ENCODE measurements at regions of chr12 and their contacts with region 1.

Region 1: GRCh38 chr12:49776413-49776812 is 35.1 kb downstream of the TMBIM6 start:
- DNase-seq: no peak
- H3K4me3 ChIP-seq: no peak overlapping the region
- CTCF ChIP-seq: peak; percentile 83

Region 2: GRCh38 chr12:49609746-49610089 is 166.7 kb before region 1 on chr12:
- CTCF ChIA-PET with region 1: no interaction called
- POLR2A ChIA-PET with region 1: no interaction called
- DNase-seq: no peak
- H3K4me3 ChIP-seq: no peak overlapping the region
- CTCF ChIP-seq: no peak

Region 3: GRCh38 chr12:49763006-49763591 is 13.3 kb before region 1 on chr12:
- CTCF ChIA-PET with region 1: interaction called, 36 read pairs
- POLR2A ChIA-PET with region 1: no interaction called
- DNase-seq: no peak
- H3K4me3 ChIP-seq: no peak overlapping the region
- CTCF ChIP-seq: peak; percentile 82

Region 4: DNA sequence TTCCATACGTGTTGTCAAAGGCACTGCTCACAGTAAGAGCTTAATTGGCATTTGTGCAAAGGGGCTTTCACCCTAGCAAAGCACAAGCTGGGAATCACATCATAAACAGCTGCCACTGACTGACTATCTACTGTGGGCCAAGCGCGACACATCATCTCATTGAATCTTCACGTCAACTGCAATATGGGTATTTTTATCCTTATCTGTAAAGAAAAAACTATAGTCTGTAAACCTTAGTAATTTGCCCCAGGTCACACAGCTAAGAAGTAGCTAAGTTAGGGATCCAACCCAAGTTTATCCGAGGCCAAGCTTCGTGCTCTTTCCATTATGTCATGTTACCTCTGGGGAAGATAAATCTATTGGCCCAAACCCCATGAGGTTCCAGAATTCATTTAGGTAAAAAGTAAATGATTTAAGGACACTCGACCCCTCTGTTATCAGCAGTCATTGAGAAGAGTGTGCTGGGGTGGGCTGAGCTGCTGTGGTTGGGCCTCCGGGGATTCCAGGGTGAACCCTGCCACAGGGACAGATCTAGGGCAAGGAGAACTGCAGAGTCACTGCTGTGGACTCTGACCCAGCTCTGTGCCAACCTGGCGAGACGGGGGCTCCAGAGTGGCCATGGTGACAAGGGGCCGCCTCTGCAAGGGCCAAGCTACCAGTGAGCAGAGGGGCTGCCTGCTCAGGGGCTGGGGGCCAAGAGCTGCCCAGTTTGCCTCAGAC is 24.2 kb after region 1 on chr12:
- CTCF ChIA-PET with region 1: interaction called, 21 read pairs
- POLR2A ChIA-PET with region 1: no interaction called
- DNase-seq: no peak
- H3K4me3 ChIP-seq: no peak overlapping the region
- CTCF ChIP-seq: no peak

Region 5: GRCh38 chr12:49828133-49829091 is 52.0 kb after region 1 on chr12 and contains the start of gene NCKAP5L:
- CTCF ChIA-PET with region 1: interaction called, 16 read pairs
- POLR2A ChIA-PET with region 1: interaction called, 4 read pairs
- DNase-seq: peak; percentile 76
- H3K4me3 ChIP-seq: peak within 1 kb of the TSS; percentile 87
- CTCF ChIP-seq: no peak